ENCODE measurements at regions of chr1 and their contacts with region 1.

Region 1: GRCh38 chr1:27300341-27301051 is 21.5 kb upstream of the TMEM222 start:
- DNase-seq: peak; percentile 82
- ATAC-seq: peak; percentile 79
- H3K4me3 Mint-ChIP-seq: no peak overlapping the region
- H3K27ac Mint-ChIP-seq: peak overlapping the region; percentile 48; the same call in 1 of the 2 replicates
- H3K4me1 Mint-ChIP-seq: peaks cover 25% of the 10 kb centered on the region
- H3K27me3 Mint-ChIP-seq: no peaks in the 10 kb centered on the region
- CTCF ChIP-seq: peak; percentile 100

Region 2: GRCh38 chr1:27102707-27103491 is 197.6 kb before region 1 on chr1:
- CTCF ChIA-PET with region 1: interaction called, 41 read pairs
- POLR2A ChIA-PET with region 1: no interaction called
- DNase-seq: peak; percentile 95
- ATAC-seq: peak; percentile 84
- H3K4me3 Mint-ChIP-seq: no peak overlapping the region
- H3K27ac Mint-ChIP-seq: no peak overlapping the region
- H3K4me1 Mint-ChIP-seq: peaks cover 29% of the 10 kb centered on the region
- H3K27me3 Mint-ChIP-seq: no peaks in the 10 kb centered on the region; the same call in 1 of the 2 replicates
- CTCF ChIP-seq: peak; percentile 99

Region 3: GRCh38 chr1:27192039-27192529 is 108.4 kb before region 1 on chr1:
- CTCF ChIA-PET with region 1: interaction called, 10 read pairs
- POLR2A ChIA-PET with region 1: no interaction called
- DNase-seq: no peak
- ATAC-seq: no peak
- H3K4me3 Mint-ChIP-seq: no peak overlapping the region
- H3K27ac Mint-ChIP-seq: no peak overlapping the region
- H3K4me1 Mint-ChIP-seq: no peaks in the 10 kb centered on the region
- H3K27me3 Mint-ChIP-seq: peaks cover 2% of the 10 kb centered on the region; the same call in 1 of the 2 replicates
- CTCF ChIP-seq: no peak

Region 4: DNA sequence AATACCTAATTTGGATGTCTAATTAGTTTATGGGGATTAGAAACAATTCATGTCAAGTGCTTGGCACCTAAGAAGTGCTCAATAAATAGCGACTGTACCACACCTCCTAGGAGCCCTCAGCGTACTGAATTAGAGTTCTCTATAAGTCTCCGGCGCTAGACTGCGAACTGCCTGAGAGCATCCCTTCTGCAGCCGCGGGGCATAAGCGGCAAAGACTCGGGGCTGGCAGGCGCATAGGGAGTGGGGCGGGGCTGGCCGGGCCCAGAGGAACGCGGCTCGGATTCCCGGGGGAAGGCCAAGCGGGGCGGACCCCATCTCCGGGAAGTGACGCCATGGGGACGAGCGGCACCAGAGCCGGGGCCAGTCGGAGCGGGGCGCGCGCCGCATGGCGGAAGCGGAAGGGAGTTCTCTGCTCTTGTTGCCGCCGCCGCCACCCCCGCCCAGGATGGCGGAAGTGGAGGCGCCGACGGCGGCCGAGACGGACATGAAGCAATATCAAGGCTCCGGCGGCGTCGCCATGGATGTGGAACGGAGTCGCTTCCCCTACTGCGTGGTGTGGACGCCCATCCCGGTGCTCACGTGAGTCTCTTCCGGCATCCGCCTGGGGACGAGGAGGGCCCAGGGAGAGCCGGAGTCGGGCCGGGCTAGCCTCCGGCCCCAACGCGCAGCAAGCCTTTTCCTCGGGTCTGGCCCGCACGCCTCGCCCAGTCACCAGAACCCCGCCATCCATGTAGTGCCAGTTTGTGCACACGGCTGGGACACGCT is 21.5 kb after region 1 on chr1 and contains the start of gene TMEM222:
- CTCF ChIA-PET with region 1: interaction called, 11 read pairs
- POLR2A ChIA-PET with region 1: no interaction called
- DNase-seq: peak; percentile 97
- ATAC-seq: peak; percentile 98
- H3K4me3 Mint-ChIP-seq: peak within 1 kb of the TSS; percentile 98
- H3K27ac Mint-ChIP-seq: peak within 1 kb of the TSS; percentile 97
- H3K4me1 Mint-ChIP-seq: peaks cover 17% of the 10 kb centered on the region
- H3K27me3 Mint-ChIP-seq: peaks cover 4% of the 10 kb centered on the region
- CTCF ChIP-seq: no peak
- total RNA-seq, gene TMEM222: 24.9 to 29.8 TPM (median 28.7 TPM) in 3 replicates

Region 5: DNA sequence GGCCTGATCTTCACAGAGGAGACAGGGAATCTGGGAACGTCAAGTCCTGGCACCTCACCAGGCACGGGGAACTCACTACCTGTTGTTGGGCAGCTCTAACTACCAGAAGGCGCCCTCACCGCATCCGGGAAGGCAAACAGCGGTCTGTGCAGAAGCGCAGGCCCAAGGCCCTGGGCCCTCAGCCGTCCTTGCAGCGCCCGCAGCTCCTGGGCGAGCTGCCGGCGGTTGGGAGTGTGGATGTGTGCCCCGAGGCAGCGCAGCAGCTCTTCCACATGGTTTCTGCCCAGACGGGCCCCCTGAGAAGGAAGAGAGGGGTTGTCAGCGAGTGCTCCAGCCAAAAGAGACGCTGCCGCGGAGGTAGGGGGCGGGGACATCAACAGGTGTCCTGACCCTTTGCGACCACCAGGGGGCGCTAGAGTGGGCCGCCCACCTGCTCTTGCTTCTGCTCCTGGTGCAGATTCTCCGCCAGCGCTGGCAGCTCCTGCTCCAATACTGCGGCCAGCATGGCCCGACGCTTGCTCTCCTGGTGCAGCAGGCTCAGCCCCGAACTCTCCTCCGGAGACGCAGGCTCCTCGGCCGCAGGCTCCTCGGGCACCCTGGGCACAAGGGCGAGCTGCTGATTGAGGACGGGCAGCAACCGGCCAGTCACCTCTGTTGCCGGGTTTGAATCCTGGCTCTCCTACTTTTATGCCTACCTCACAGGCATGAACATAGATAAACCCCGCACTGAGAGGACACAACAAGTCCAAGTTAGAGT is 57.0 kb after region 1 on chr1:
- CTCF ChIA-PET with region 1: interaction called, 100 read pairs
- POLR2A ChIA-PET with region 1: interaction called, 3 read pairs
- DNase-seq: peak; percentile 87
- ATAC-seq: peak; percentile 70
- H3K4me3 Mint-ChIP-seq: peak overlapping the region; percentile 37
- H3K27ac Mint-ChIP-seq: no peak overlapping the region
- H3K4me1 Mint-ChIP-seq: peaks cover 17% of the 10 kb centered on the region
- H3K27me3 Mint-ChIP-seq: peaks cover 49% of the 10 kb centered on the region
- CTCF ChIP-seq: peak; percentile 100

Region 6: GRCh38 chr1:27402349-27402754 is 101.9 kb after region 1 on chr1:
- CTCF ChIA-PET with region 1: interaction called, 150 read pairs
- POLR2A ChIA-PET with region 1: interaction called, 3 read pairs
- DNase-seq: peak; percentile 69
- ATAC-seq: peak; percentile 18
- H3K4me3 Mint-ChIP-seq: no peak overlapping the region
- H3K27ac Mint-ChIP-seq: peak overlapping the region; percentile 91
- H3K4me1 Mint-ChIP-seq: peaks cover 78% of the 10 kb centered on the region
- H3K27me3 Mint-ChIP-seq: no peaks in the 10 kb centered on the region
- CTCF ChIP-seq: no peak